Heart right ventricle (tissue), 16 donors: ENCODE measurements at regions of chr14 and their contacts with region 1.

Region 1: DNA sequence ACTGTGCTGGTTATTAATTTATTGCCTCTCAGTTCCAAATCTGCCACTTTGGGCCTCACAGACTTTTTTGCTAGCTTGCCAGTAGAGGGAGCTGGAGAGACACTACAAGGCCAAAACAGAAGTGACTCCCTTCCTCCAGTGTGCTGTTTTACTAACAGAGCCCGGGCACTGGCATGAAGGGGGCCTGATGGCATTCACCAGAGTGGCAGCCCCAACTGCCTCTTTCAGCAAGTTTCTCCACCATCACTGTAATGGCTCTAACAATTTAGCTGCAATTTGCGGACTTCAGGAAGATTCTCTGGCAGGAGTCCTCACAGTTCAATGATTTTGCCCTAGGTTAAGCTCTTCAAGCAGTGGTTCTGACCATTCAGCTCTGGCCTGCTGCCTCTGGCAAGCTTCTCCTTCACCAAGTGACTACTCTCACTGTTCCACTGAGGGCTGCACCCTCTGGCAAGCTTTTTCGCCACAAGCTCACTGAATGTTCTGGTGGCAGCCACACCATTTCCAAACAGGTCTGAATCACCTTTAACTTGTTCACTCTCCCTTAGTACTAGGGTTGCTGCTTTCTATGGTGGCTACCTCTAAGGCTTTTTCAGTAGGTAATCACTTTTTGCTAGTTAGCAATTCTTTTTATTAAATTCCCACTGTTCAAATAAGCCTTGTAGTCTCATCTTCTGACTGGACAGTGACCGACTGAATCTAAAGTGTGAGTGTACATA is 104.9 kb downstream of the ZC3H14 start:
- DNase-seq: peak in 1 of 2 donors; percentile 53
- ATAC-seq: peak; percentile 55 to 82 (median 76)
- H3K4me3 ChIP-seq: no peak overlapping the region
- H3K27ac ChIP-seq: no peak overlapping the region
- H3K4me1 ChIP-seq: peaks cover 0 to 12% (median 0%) of the 10 kb centered on the region in 9 donors
- H3K27me3 ChIP-seq: no peaks in the 10 kb centered on the region
- CTCF ChIP-seq: peak; percentile 42 to 87 (median 78)

Region 2: GRCh38 chr14:88856786-88857366 is 189.2 kb after region 1 on chr14:
- intact Hi-C with region 1: loop called in 3 of 10 experiments (anchors 10 kb)
- DNase-seq: no peak
- ATAC-seq: no peak
- H3K4me3 ChIP-seq: no peak overlapping the region
- H3K27ac ChIP-seq: no peak overlapping the region
- H3K4me1 ChIP-seq: no peaks in the 10 kb centered on the region
- H3K27me3 ChIP-seq: no peaks in the 10 kb centered on the region
- CTCF ChIP-seq: no peak

Region 3: GRCh38 chr14:88868558-88869159 is 200.9 kb after region 1 on chr14:
- intact Hi-C with region 1: loop called in 5 of 10 experiments (anchors 5 to 10 kb)
- DNase-seq: no peak
- ATAC-seq: no peak
- H3K4me3 ChIP-seq: no peak overlapping the region
- H3K27ac ChIP-seq: no peak overlapping the region
- H3K4me1 ChIP-seq: no peaks in the 10 kb centered on the region
- H3K27me3 ChIP-seq: no peaks in the 10 kb centered on the region
- CTCF ChIP-seq: peak in 7 of 9 donors; percentile 9 to 50 (median 27)

Region 4: DNA sequence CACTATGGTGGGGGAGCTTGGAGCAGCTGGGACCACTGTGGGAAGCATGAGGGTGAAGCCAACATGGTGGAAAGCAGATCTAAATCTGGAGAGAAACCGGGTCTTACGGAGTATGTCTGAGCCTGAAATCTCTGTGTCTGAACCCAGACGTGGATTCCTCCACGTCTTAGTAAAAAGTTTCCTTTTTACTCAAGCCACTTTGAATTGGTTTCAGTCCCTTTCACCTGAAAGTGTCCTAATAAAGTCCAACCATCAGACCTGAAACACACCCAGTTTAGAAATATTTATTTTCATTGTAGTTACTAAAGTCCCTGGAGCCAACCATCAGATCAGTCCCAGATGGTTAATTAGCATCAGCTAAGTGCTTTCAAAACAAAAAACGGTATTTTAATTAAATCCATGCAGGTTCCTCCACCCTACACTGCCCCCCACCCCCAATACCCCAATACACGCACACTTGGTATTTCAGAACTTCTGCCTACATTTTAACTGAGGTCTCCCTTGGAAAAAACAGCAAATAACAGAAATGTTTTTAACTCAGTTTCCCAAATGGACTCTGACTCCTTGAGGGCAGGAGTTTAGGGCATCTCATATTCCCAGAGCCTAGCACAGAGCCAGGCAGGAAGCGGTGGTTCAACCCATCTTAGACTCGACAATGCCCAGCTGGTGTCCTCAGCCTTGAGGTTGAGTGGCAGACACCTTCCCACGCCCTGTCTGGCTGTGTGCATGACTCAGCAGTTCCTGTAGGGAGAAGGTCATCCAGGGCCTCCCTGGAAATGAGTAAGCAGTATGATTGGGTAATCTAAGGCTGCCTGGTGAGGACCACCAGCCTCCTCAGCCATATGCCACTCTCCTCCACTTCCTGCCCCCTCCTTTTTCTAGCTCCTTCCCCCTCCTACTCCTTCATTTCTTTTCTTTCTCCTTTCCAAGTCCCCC is 332.6 kb after region 1 on chr14:
- intact Hi-C with region 1: loop called in 1 of 10 experiments (anchors 10 kb)
- DNase-seq: peak in 1 of 2 donors; percentile 14
- ATAC-seq: peak in 3 of 8 donors; percentile 24 to 96 (median 70)
- H3K4me3 ChIP-seq: no peak overlapping the region
- H3K27ac ChIP-seq: peak overlapping the region in 1 of 10 donors; percentile 16
- H3K4me1 ChIP-seq: peaks cover 0 to 12% (median 0%) of the 10 kb centered on the region in 9 donors
- H3K27me3 ChIP-seq: peaks cover 0 to 4% (median 0%) of the 10 kb centered on the region in 7 donors
- CTCF ChIP-seq: no peak

Region 5: GRCh38 chr14:89013084-89013504 is 345.4 kb after region 1 on chr14:
- intact Hi-C with region 1: loop called in 2 of 10 experiments (anchors 5 to 10 kb)
- DNase-seq: no peak
- ATAC-seq: no peak
- H3K4me3 ChIP-seq: no peak overlapping the region
- H3K27ac ChIP-seq: no peak overlapping the region
- H3K4me1 ChIP-seq: no peaks in the 10 kb centered on the region
- H3K27me3 ChIP-seq: peaks cover 0 to 7% (median 0%) of the 10 kb centered on the region in 7 donors
- CTCF ChIP-seq: peak in 1 of 9 donors; percentile 15

Region 6: GRCh38 chr14:89915114-89915878 is 1247.6 kb after region 1 on chr14:
- intact Hi-C with region 1: loop called in 4 of 10 experiments (anchors 5 to 10 kb)
- DNase-seq: peak in 1 of 2 donors; percentile 41
- ATAC-seq: peak in 3 of 8 donors; percentile 36 to 65 (median 63)
- H3K4me3 ChIP-seq: no peak overlapping the region
- H3K27ac ChIP-seq: no peak overlapping the region
- H3K4me1 ChIP-seq: peaks cover 0 to 14% (median 0%) of the 10 kb centered on the region in 9 donors
- H3K27me3 ChIP-seq: no peaks in the 10 kb centered on the region
- CTCF ChIP-seq: peak; percentile 89 to 98 (median 96)